Heart left ventricle (tissue), 16 donors: ENCODE measurements at regions of chr9 and their contacts with region 1.

Region 1: GRCh38 chr9:100011062-100011681 is 87.6 kb downstream of the ERP44 start:
- DNase-seq: no peak
- ATAC-seq: no peak
- H3K4me3 ChIP-seq: no peak overlapping the region
- H3K27ac ChIP-seq: no peak overlapping the region
- H3K4me1 ChIP-seq: no peaks in the 10 kb centered on the region
- H3K27me3 ChIP-seq: no peaks in the 10 kb centered on the region
- CTCF ChIP-seq: peak; percentile 19 to 62 (median 48)
- POLR2A ChIP-seq: no peak

Region 2: DNA sequence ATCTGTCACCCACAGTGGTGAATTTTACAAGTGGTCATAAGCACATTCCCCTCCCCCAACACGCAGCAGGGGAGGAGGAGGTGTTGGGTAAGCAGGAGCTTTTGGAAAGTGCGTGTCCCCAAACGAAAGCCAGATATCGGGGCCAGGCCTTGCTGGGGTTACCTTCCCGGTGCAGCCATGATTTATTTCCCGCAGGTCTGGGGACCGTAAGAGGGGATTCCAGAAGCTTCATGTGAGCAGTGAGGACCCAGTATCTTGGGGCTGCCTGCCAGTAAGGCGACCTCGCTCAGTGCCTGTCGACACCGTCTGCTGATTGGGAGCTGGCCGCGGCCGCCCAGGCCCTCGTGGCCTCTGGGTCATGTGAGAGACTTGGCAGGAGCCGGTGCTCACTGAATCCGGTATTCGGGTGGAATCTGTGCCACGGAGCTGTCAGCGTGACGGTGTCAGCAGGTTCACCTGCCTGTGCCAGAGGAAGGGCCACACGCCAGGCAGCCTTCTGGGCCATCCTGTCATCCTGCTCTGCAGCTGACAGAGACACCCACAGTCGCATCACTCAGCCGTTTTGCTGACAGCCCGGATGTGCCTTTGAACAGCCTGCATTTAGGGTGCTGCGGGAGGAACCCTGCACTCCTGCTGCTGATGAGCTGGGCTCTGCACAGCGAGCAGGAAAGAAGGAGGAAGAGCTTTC is 751.8 kb before region 1 on chr9:
- intact Hi-C with region 1: loop called in 1 of 10 experiments (anchors 10 kb)
- DNase-seq: peak; percentile 86 to 96 (median 91)
- ATAC-seq: peak; percentile 95 to 96 (median 96)
- H3K4me3 ChIP-seq: peak overlapping the region in 11 of 12 donors; percentile 4 to 57 (median 45)
- H3K27ac ChIP-seq: peak overlapping the region; percentile 36 to 90 (median 80)
- H3K4me1 ChIP-seq: peaks cover 0 to 39% (median 11%) of the 10 kb centered on the region in 12 donors
- H3K27me3 ChIP-seq: no peaks in the 10 kb centered on the region
- CTCF ChIP-seq: no peak
- POLR2A ChIP-seq: peak in 1 of 2 donors; percentile 47

Region 3: GRCh38 chr9:99266255-99267023 is 744.7 kb before region 1 on chr9:
- intact Hi-C with region 1: loop called in 1 of 10 experiments (anchors 5 kb)
- DNase-seq: peak; percentile 63 to 79 (median 66)
- ATAC-seq: peak; percentile 55 to 88 (median 82)
- H3K4me3 ChIP-seq: no peak overlapping the region
- H3K27ac ChIP-seq: no peak overlapping the region
- H3K4me1 ChIP-seq: peaks cover 0 to 10% (median 2%) of the 10 kb centered on the region in 12 donors
- H3K27me3 ChIP-seq: no peaks in the 10 kb centered on the region
- CTCF ChIP-seq: peak; percentile 65 to 90 (median 78)
- POLR2A ChIP-seq: no peak